ENCODE measurements at regions of chr19 and their contacts with region 1.

Region 1: DNA sequence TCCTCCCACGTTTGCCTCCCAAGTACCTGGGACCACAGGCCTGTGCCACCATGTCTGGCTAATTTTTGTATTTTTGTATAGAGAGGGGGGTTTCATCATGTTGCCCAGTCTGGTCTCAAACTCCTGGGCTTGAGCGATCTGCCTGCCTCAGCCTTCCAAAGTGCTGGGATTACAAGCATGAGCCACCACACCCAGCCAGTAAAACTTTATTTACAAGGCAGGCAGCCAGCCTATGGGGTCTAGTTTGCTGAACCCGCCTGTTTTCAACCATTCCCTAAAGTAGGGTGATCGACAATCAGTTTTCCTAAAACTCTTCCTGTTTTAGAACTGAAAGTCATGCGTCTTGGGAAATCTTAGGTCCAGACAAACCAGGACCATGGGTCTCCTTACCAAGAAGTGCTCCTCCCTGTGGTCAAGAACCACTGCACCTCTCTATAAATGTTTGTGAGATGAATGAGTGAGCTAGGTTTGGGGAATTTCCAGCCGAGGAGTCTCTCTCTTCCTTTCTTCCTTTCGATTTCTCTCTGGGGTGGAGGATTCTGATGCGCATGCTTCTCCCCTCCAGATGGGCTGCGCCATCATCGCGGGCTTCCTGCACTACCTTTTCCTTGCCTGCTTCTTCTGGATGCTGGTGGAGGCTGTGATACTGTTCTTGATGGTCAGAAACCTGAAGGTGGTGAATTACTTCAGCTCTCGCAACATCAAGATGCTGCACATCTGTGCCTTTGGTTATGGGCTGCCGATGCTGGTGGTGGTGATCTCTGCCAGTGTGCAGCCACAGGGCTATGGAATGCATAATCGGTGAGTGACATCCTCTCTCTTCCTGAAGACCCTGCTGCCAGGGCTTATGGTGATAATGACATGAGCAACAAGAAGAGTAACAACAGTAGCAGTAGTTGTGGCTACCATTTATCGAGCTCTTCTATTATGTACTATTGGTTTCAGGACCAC is 38.7 kb downstream of the ADGRE1 start:
- DNase-seq: peak; percentile 22
- CTCF ChIP-seq: no peak

Region 2: DNA sequence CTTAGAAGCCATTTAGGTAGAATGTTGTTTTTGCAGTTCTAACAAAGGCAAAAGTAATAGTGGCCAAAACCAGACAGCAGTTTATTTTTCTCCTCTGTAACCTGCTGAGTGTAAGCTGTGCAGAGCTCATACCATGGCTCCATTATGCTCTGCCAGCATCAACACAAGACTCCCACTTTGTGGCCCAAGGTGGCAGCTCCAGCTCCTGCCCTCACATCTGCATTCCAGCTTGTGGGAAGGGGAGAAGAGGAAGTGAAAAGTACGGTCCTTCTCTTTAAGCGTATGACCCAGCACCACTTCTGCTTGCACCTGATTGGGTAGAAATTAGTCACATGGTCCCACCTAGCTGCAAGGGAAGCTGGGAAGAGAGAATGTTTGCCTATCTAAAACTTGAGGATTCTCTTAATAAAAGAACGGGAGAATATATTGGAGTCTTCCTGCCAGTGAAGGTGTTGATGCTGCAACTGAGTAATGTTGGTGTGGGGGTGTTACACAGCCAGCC is 19.5 kb before region 1 on chr19:
- CTCF ChIA-PET with region 1: no interaction called
- POLR2A ChIA-PET with region 1: no interaction called
- DNase-seq: no peak
- CTCF ChIP-seq: no peak

Region 3: DNA sequence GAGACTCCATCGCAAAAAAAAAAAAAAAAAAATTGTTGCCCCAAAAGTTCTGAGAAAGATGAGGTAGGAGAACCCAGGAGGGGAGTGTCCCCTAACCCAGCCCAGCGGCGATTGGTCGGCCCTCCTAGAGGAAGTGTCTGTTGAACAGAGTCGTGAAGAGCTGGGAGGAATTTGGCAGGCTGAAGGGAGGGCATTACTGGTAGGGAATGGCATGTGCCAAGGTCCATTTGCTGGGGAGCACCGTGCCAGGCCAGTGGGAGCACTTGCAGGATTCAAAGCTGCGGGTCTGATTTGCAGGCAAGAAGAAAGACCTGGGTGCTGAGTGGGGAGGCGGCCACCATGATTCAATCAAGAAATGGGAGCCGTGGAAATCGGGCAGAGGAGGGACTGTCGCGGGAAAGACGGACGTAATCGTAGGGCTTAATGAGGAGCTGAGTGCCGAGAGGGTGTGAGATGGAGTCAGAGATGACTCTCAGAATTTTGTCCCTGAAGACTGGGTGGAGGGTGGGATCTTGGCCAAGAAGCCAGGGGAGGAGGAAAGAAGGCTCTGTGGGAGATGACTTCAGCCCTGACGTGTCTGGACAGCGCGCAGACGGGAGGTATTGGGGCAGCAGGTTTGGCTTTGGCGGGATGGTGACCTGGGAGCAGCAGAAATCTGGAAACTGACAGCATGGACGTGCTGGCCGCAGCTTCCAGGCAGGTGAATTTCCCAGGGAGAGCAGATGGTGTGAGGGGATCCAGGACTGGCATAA is 1298.5 kb after region 1 on chr19:
- CTCF ChIA-PET with region 1: no interaction called
- POLR2A ChIA-PET with region 1: interaction called, 10 read pairs
- DNase-seq: no peak
- CTCF ChIP-seq: no peak